HCT116 (cell line): ENCODE measurements at regions of chr12 and their contacts with region 1.

Region 1: GRCh38 chr12:56117778-56118687 is at the start of gene ZC3H10:
- DNase-seq: peak; percentile 99
- ATAC-seq: peak; percentile 73
- H3K4me3 ChIP-seq: peak within 1 kb of the TSS; percentile 80 to 82
- H3K27ac ChIP-seq: peak within 1 kb of the TSS; percentile 93
- H3K4me1 ChIP-seq: peaks cover 23 to 34% of the 10 kb centered on the region in 2 experiments
- H3K27me3 ChIP-seq: no peaks in the 10 kb centered on the region
- CTCF ChIP-seq: peak in 2 of 3 experiments; percentile 30 to 37; a peak in 3 of 6 replicates
- POLR2A ChIP-seq: peak; percentile 99
- RAD21 ChIP-seq: no peak
- total RNA-seq, gene ZC3H10: 8.7 TPM

Region 2: GRCh38 chr12:55745361-55746146 is 372.5 kb before region 1 on chr12:
- CTCF ChIA-PET with region 1: no interaction called
- POLR2A ChIA-PET with region 1: no interaction called
- RAD21 ChIA-PET with region 1: no interaction called
- intact Hi-C with region 1: no loop called
- DNase-seq: no peak
- ATAC-seq: no peak
- H3K4me3 ChIP-seq: no peak overlapping the region
- H3K27ac ChIP-seq: no peak overlapping the region
- H3K4me1 ChIP-seq: peaks cover 7 to 27% of the 10 kb centered on the region in 2 experiments
- H3K27me3 ChIP-seq: no peaks in the 10 kb centered on the region
- CTCF ChIP-seq: no peak
- POLR2A ChIP-seq: no peak
- RAD21 ChIP-seq: no peak

Region 3: DNA sequence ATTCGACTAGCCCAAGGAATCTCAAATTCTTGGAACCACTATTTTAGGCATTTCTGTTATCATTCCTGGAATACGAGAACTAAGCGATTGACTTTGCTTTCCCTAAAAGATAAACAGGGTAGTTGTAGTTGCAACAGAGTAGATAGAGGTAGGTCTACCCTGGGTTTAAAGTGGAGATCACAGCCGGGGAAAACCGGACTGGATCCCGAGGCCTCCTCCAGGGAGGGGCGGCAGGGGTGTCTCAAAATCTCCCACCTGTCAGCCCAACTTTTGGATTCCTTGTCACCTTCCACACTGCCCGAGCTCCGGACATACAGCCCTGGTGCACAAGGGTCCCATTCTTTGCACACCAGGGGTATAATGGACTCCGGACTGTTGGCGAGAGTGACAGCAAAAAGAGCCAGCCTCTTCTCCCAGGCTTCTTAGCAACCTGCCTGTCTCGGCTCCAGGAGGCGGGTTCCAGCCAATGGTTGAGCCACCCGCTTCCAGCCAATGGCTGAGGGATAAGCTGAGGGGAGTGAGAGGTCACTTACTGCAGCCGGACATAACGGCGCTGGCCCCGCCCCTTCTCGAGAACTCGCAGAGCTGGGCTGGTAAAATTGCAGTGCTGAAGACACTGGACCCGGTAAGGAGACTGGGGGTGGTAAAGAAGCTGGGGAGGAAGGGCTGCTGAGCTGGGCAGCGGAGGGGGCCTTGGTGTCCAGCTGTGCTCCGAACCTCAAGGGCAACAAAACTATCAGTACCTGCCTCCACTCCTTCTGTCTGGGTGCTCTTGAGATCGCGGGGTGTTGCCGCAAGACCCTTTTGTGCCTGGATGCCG is 121.1 kb before region 1 on chr12 and contains the start of gene SUOX:
- CTCF ChIA-PET with region 1: interaction called, 4 read pairs
- POLR2A ChIA-PET with region 1: interaction called, 4 read pairs
- RAD21 ChIA-PET with region 1: no interaction called
- intact Hi-C with region 1: loop called (anchors 5 kb)
- DNase-seq: peak; percentile 93
- ATAC-seq: peak; percentile 99
- H3K4me3 ChIP-seq: peak within 1 kb of the TSS; percentile 62 to 76
- H3K27ac ChIP-seq: peak within 1 kb of the TSS; percentile 63
- H3K4me1 ChIP-seq: peaks cover 8 to 15% of the 10 kb centered on the region in 2 experiments; a peak in 3 of 4 replicates
- H3K27me3 ChIP-seq: no peaks in the 10 kb centered on the region
- CTCF ChIP-seq: no peak
- POLR2A ChIP-seq: peak; percentile 55
- RAD21 ChIP-seq: no peak
- total RNA-seq, gene SUOX: 18.0 TPM

Region 4: DNA sequence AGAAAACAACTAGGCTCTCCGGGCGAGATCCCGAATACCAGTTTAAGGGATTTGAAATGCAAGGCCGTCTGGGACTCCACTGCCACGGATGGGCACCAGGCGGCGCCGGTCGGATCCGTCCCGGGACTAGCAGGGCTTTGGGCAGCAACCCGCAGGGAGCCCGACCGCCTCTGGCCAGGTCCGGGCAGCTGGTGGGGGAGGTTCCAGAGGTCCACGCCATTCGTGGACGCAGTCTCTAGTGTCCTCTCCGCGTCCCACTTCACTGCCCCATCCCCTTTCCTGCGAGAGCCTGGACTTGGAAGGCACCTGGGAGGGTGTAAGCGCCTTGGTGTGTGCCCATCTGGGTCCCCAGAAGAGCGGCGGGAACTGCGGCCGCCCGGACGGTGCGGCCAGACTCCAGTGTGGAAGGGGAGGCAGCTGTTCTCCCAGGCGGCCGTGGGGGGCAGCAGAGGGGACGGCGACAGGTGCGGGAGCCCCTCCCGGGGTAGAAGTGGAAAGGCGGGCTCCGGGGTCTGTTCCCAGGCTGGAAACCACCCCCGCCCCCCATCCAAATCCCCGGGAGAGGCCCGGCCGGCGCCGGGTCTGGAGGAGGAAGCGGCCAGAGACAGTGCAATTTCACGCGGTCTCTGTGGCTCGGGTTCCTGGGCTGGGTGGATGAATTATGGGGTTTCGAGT is 38.9 kb before region 1 on chr12:
- CTCF ChIA-PET with region 1: interaction called, 3 read pairs
- POLR2A ChIA-PET with region 1: interaction called, 12 read pairs
- RAD21 ChIA-PET with region 1: interaction called, 3 read pairs
- intact Hi-C with region 1: loop called (anchors 1 kb)
- DNase-seq: peak; percentile 83
- ATAC-seq: peak; percentile 78
- H3K4me3 ChIP-seq: peak overlapping the region; percentile 70 to 90
- H3K27ac ChIP-seq: peak overlapping the region; percentile 93
- H3K4me1 ChIP-seq: peaks cover 17 to 37% of the 10 kb centered on the region in 2 experiments
- H3K27me3 ChIP-seq: no peaks in the 10 kb centered on the region
- CTCF ChIP-seq: peak; percentile 62 to 86 (median 77); a peak in 5 of 6 replicates
- POLR2A ChIP-seq: peak; percentile 34
- RAD21 ChIP-seq: peak; percentile 69

Region 5: GRCh38 chr12:56127888-56128669 is 10.0 kb after region 1 on chr12 and contains the start of gene ESYT1:
- CTCF ChIA-PET with region 1: interaction called, 24 read pairs
- POLR2A ChIA-PET with region 1: interaction called, 42 read pairs
- RAD21 ChIA-PET with region 1: no interaction called
- intact Hi-C with region 1: no loop called
- DNase-seq: peak; percentile 100
- ATAC-seq: peak; percentile 93
- H3K4me3 ChIP-seq: peak within 1 kb of the TSS; percentile 90 to 91
- H3K27ac ChIP-seq: peak within 1 kb of the TSS; percentile 76
- H3K4me1 ChIP-seq: peaks cover 16 to 33% of the 10 kb centered on the region in 2 experiments
- H3K27me3 ChIP-seq: no peaks in the 10 kb centered on the region
- CTCF ChIP-seq: no peak
- POLR2A ChIP-seq: peak; percentile 88
- RAD21 ChIP-seq: no peak
- total RNA-seq, gene ESYT1: 80.9 TPM

Region 6: GRCh38 chr12:56189176-56189917 is 71.3 kb after region 1 on chr12 and contains the start of gene SMARCC2:
- CTCF ChIA-PET with region 1: interaction called, 29 read pairs
- POLR2A ChIA-PET with region 1: interaction called, 15 read pairs
- RAD21 ChIA-PET with region 1: interaction called, 4 to 6 read pairs
- intact Hi-C with region 1: loop called (anchors 1 kb)
- DNase-seq: peak; percentile 75
- ATAC-seq: peak; percentile 85
- H3K4me3 ChIP-seq: peak within 1 kb of the TSS; percentile 86 to 88
- H3K27ac ChIP-seq: peak within 1 kb of the TSS; percentile 84
- H3K4me1 ChIP-seq: peaks cover 17 to 27% of the 10 kb centered on the region in 2 experiments
- H3K27me3 ChIP-seq: no peaks in the 10 kb centered on the region
- CTCF ChIP-seq: peak; percentile 65 to 70 (median 65)
- POLR2A ChIP-seq: no peak
- RAD21 ChIP-seq: peak; percentile 54; the same call in 1 of the 2 replicates
- total RNA-seq, gene SMARCC2: 99.7 TPM

Region 7: DNA sequence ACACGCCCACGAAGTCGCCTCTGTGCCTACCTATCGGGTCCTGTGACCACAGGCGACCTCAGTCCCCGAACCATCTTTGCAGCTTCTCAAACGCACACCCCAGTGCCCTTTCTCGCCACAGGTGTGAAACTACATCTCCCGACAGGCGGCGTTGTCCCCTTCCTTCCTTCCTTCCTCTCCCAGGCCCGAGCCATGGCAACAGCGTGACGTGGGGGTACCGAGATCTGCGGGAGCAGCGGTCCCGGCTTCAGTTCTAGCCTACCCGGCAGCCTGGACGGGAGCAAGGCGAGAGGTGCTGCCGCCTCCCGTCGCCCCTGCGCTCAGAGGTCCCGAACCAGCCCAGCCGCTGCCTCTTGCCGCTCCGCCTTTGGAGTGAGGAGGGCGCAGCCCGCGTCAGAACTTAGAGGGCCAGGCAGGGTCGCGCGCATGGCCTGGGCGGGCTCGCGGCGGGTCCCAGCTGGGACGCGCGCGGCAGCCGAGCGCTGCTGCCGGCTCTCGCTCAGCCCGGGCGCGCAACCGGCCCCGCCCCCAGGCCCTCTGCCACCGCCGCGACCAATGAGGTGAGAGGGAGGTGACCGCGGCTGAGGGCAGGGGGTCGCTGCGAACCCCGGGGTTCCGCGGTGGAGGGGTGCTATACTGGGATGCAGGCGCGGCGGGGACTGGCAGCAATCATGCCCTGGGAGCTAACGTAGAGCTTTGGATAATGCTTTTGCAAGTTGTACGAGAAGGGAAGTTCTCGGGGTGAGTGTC is 148.8 kb after region 1 on chr12 and contains the start of gene COQ10A:
- CTCF ChIA-PET with region 1: no interaction called
- POLR2A ChIA-PET with region 1: no interaction called
- RAD21 ChIA-PET with region 1: no interaction called
- intact Hi-C with region 1: loop called (anchors 2 kb)
- DNase-seq: peak; percentile 78
- ATAC-seq: peak; percentile 91
- H3K4me3 ChIP-seq: peak within 1 kb of the TSS; percentile 65 to 75
- H3K27ac ChIP-seq: peak within 1 kb of the TSS; percentile 71
- H3K4me1 ChIP-seq: peaks cover 5 to 31% of the 10 kb centered on the region in 2 experiments
- H3K27me3 ChIP-seq: no peaks in the 10 kb centered on the region
- CTCF ChIP-seq: peak; percentile 45 to 72 (median 54)
- POLR2A ChIP-seq: peak; percentile 86
- RAD21 ChIP-seq: peak; percentile 49
- total RNA-seq, gene COQ10A: 11.7 TPM

Region 8: DNA sequence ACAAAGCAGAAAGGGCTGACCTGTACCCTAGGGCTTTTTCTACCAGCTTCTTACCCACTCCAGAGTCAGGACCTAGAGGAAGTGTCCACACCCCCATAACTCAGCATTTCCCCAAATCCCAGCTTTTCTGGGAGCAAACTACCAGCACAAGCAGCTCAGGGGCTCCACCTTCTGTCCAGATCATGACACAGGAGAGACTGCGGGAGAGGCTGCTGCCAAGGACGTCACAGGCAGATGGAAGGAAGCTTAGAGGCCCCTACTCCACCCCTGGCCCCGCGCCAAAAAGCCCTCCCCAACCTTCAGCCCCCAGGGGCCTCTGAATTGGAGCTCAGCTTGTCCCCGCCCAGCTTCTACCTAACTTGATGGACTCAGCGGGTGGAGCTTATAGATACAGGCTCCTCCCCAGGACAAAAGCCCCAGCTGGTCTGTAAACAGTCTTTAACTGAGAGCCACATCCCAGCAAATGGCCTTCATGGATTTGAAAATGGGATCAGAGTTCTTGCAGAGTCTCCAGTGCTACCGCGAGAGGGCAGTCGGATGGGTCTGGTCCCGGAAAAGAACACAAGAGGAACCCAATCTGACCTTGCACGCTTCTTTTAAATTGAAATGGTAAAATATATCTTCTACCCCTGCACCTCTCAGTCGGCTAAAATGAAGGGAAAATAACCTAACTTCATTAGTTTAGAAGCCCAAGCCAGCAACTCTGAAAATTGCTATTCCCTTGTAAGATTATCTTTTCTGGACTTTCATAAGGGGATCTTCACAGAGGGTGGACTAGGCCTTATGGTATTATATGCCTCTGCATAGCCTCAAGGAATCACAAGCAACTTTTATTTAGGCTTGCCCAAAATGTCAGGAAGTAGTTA is 518.9 kb after region 1 on chr12:
- CTCF ChIA-PET with region 1: no interaction called
- POLR2A ChIA-PET with region 1: no interaction called
- RAD21 ChIA-PET with region 1: no interaction called
- intact Hi-C with region 1: loop called (anchors 2 kb)
- DNase-seq: peak; percentile 99
- ATAC-seq: peak; percentile 69
- H3K4me3 ChIP-seq: peak overlapping the region; percentile 80 to 93
- H3K27ac ChIP-seq: peak overlapping the region; percentile 88
- H3K4me1 ChIP-seq: peaks cover 32 to 62% of the 10 kb centered on the region in 2 experiments
- H3K27me3 ChIP-seq: no peaks in the 10 kb centered on the region
- CTCF ChIP-seq: peak in 2 of 3 experiments; percentile 71 to 73; a peak in 4 of 6 replicates
- POLR2A ChIP-seq: no peak
- RAD21 ChIP-seq: no peak